RWPE1 (cell line): ENCODE measurements at regions of chrX and their contacts with region 1.

Region 1: GRCh38 chrX:136162831-136163570 is 15.7 kb downstream of the FHL1 start:
- DNase-seq: peak; percentile 41
- H3K27ac ChIP-seq: no peak overlapping the region
- CTCF ChIP-seq: peak; percentile 50

Region 2: DNA sequence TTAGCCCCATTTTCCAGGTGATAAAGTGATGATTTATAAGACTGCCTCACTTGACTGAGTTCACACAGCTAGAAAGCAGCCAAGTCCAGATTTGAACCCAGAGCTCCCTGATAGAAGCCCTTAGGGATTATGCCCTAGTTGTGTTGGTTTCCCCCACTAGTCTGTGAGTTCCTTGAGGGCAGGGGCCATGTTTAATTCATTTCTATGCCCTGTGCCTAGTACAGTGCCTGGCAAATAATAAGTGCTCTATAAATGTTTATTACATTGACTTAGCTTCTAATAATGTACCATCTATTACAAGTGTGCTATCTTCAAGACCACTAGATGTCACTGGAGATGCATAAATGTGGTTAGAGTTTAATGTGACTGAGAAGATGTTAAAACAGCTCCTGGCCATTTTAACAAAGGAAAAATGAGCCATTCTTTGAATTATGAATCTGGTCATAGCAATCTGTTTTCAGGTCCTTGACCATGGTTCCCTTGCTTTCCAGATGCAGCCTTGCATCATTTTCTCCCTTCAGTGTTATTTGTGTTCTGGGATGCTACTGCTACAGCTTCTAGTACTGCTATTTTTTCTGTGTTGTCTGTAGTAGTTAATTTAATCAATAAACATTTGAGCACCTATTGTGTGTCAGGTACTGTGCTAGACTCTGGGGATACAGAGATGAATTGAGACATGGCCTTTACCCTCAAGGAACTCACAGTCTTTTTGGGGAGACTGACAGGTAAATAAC is 134.6 kb before region 1 on chrX:
- CTCF ChIA-PET with region 1: interaction called, 18 read pairs
- POLR2A ChIA-PET with region 1: no interaction called
- DNase-seq: peak; percentile 18
- H3K27ac ChIP-seq: no peak overlapping the region
- CTCF ChIP-seq: peak; percentile 38

Region 3: GRCh38 chrX:136496770-136497598 is 334.0 kb after region 1 on chrX and contains the start of gene HTATSF1:
- CTCF ChIA-PET with region 1: no interaction called
- POLR2A ChIA-PET with region 1: no interaction called
- DNase-seq: peak; percentile 57
- H3K27ac ChIP-seq: peak within 1 kb of the TSS; percentile 96
- CTCF ChIP-seq: no peak